MCF 10A (cell line): ENCODE measurements at regions of chr3 and their contacts with region 1.

Region 1: DNA sequence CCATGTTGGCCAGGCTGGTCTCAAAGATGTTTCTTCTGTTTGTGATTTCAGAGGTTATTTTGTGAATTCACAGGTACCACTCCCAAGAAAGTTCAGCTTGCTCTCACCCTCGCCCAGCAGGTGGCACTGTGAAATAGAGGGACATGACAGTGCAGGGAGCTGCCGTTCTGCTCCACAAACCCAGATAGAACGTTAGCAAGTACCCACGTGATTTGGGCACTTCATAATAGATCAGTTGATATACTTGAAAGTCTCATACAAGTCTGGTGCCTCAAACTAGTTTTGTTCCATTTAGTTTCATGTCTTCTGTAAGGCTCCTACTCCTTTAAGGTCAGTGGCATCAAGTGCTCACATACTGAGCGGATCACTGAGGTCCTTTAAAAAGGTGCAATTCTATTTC is 45.5 kb downstream of the FILIP1L start:
- DNase-seq: peak; percentile 84
- H3K4me3 Mint-ChIP-seq: no peak overlapping the region
- H3K27ac Mint-ChIP-seq: no peak overlapping the region
- H3K4me1 Mint-ChIP-seq: peaks cover 7% of the 10 kb centered on the region
- H3K27me3 Mint-ChIP-seq: no peaks in the 10 kb centered on the region
- CTCF ChIP-seq: peak; percentile 66

Region 2: DNA sequence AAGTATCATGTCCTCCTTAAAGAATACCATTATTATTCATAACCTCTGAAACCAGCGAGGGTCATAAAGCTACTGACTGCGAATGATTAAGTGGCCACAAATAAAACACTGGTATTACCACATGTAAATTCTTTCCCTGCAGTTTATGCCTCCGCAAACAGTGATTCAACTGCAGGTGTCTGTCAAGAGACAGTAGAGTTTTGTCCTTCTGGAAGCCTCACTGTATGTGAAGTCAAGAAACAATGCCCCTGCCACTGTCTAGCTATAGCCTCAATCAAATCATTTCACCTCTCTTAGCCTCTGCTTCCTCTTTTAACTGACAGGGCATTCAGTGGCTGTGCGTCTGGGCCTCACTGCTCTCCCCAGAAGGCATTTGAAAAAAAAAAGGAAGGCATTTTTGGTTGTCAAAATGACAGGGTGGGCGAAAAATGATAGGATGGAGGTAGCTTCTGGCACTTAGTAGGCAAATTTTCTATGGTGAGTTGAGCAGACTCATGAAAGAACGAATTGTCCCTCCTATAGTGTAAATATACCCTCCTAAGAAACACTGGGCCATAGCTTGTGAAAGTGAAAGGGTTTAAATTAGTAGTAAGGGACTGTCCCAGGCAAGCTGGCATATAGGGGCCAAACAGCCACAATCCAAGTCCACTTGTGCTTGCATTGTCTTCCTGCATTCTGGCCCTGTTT is 21.2 kb before region 1 on chr3:
- CTCF ChIA-PET with region 1: interaction called, 19 read pairs
- POLR2A ChIA-PET with region 1: interaction called, 3 read pairs
- intact Hi-C with region 1: no loop called
- DNase-seq: peak; percentile 74
- H3K4me3 Mint-ChIP-seq: peak overlapping the region; percentile 22
- H3K27ac Mint-ChIP-seq: peak overlapping the region; percentile 85
- H3K4me1 Mint-ChIP-seq: peaks cover 44% of the 10 kb centered on the region
- H3K27me3 Mint-ChIP-seq: no peaks in the 10 kb centered on the region
- CTCF ChIP-seq: no peak

Region 3: DNA sequence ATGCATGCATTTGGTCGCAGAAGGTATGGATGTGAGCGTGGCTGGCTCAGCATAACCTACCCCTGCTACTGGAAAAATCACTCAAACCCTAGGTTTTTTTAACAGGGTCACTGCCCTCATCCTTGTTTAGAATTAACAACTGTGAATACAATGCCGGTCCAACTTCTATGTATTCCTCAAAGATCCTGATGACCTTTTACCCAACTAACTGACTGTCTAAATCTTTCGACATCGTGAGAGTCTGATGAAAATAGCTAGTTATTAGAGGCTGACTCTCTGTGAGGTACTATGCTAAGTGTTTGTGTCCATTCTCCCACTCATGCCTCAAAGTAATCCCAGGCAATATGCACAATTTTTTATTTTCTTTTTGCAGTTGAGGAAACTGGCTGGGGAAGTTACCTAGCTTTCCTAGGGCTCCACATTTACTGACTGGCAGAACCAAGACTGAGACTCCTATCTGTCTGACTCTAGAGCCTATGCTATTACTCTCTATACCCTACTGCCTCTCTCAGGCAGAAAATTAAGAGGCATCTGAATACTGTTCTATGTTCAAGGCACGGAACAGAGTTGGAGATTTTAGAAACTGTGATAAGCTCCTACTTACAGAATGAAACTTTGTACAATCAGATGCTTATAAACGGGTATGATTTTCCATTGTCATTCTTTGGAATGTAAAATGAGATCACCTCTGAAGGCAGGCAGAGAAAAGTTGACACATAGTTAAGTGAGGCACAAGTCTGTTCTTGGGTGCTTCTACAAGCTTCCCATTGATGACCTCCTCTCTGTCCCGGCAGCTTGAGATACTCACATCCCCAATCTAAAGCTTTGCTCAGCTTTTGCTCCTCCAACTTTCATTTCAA is 10.9 kb before region 1 on chr3:
- CTCF ChIA-PET with region 1: interaction called, 43 read pairs
- POLR2A ChIA-PET with region 1: interaction called, 6 read pairs
- intact Hi-C with region 1: no loop called
- DNase-seq: no peak
- H3K4me3 Mint-ChIP-seq: no peak overlapping the region
- H3K27ac Mint-ChIP-seq: no peak overlapping the region
- H3K4me1 Mint-ChIP-seq: peaks cover 6% of the 10 kb centered on the region
- H3K27me3 Mint-ChIP-seq: no peaks in the 10 kb centered on the region
- CTCF ChIP-seq: no peak

Region 4: DNA sequence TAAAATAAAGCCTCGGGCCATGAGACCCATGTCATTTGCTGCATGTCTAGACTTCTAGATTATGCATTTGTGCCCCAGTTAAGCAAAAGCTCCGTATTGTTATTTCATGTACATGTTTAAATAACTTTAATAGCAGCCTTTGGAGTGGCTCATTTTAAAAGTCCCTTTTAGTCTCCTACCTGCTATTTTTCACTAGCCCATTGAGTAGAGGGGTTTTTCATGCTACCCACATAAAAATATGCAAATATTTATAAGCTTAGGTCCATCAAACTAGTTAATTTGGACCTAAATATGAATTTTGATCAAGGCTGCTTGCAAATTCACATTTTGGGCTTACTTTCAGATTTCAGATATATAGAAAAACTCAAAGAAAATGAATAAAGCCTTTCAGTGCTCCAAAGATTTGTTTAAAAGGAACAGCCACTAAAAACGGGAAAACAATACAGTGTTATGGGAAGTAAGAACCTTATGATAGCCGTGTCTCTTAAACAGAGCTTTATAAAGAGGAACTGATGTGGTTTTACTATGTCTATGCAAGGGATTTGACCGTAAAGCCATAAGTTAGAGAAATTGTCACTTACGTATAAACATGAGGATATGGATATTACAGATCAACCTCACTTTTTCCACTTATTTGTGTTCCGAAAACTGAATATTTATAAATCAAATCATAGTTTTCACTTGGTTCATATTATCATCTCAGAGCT is 15.4 kb after region 1 on chr3:
- CTCF ChIA-PET with region 1: interaction called, 14 read pairs
- POLR2A ChIA-PET with region 1: interaction called, 4 read pairs
- intact Hi-C with region 1: no loop called
- DNase-seq: no peak
- H3K4me3 Mint-ChIP-seq: no peak overlapping the region
- H3K27ac Mint-ChIP-seq: no peak overlapping the region
- H3K4me1 Mint-ChIP-seq: peaks cover 9% of the 10 kb centered on the region
- H3K27me3 Mint-ChIP-seq: no peaks in the 10 kb centered on the region
- CTCF ChIP-seq: no peak

Region 5: GRCh38 chr3:100089812-100090668 is 21.2 kb after region 1 on chr3:
- CTCF ChIA-PET with region 1: interaction called, 14 read pairs
- POLR2A ChIA-PET with region 1: interaction called, 4 read pairs
- intact Hi-C with region 1: no loop called
- DNase-seq: peak; percentile 65
- H3K4me3 Mint-ChIP-seq: no peak overlapping the region
- H3K27ac Mint-ChIP-seq: no peak overlapping the region
- H3K4me1 Mint-ChIP-seq: peaks cover 14% of the 10 kb centered on the region
- H3K27me3 Mint-ChIP-seq: no peaks in the 10 kb centered on the region
- CTCF ChIP-seq: peak; percentile 34

Region 6: GRCh38 chr3:100254168-100254777 is 185.4 kb after region 1 on chr3:
- CTCF ChIA-PET with region 1: interaction called, 29 read pairs
- POLR2A ChIA-PET with region 1: no interaction called
- intact Hi-C with region 1: loop called (anchors 1 kb)
- DNase-seq: peak; percentile 68
- H3K4me3 Mint-ChIP-seq: no peak overlapping the region
- H3K27ac Mint-ChIP-seq: no peak overlapping the region
- H3K4me1 Mint-ChIP-seq: no peaks in the 10 kb centered on the region
- H3K27me3 Mint-ChIP-seq: no peaks in the 10 kb centered on the region
- CTCF ChIP-seq: peak; percentile 78